ENCODE measurements at regions of chr17 and their contacts with region 1.

Region 1: GRCh38 chr17:82716203-82717010 is at the start of gene FN3KRP:
- DNase-seq: peak; percentile 85
- H3K4me3 Mint-ChIP-seq: peak within 1 kb of the TSS; percentile 93
- H3K27ac Mint-ChIP-seq: peak within 1 kb of the TSS; percentile 86
- H3K4me1 Mint-ChIP-seq: peaks cover 18% of the 10 kb centered on the region
- H3K27me3 Mint-ChIP-seq: no peaks in the 10 kb centered on the region
- total RNA-seq, gene FN3KRP: 37.6 and 43.7 TPM in 2 replicates

Region 2: GRCh38 chr17:82648166-82648668 is 68.2 kb before region 1 on chr17 and contains the start of gene WDR45B:
- intact Hi-C with region 1: loop called (anchors 1 kb)
- DNase-seq: peak; percentile 90
- H3K4me3 Mint-ChIP-seq: peak within 1 kb of the TSS; percentile 89
- H3K27ac Mint-ChIP-seq: peak within 1 kb of the TSS; percentile 76
- H3K4me1 Mint-ChIP-seq: peaks cover 25% of the 10 kb centered on the region
- H3K27me3 Mint-ChIP-seq: no peaks in the 10 kb centered on the region
- total RNA-seq, gene WDR45B: 55.1 and 56.7 TPM in 2 replicates

Region 3: GRCh38 chr17:82698065-82698973 is 18.1 kb before region 1 on chr17 and contains the start of gene RAB40B:
- intact Hi-C with region 1: loop called (anchors 1 kb)
- DNase-seq: peak; percentile 98
- H3K4me3 Mint-ChIP-seq: peak within 1 kb of the TSS; percentile 83
- H3K27ac Mint-ChIP-seq: no peak within 1 kb of the TSS
- H3K4me1 Mint-ChIP-seq: no peaks in the 10 kb centered on the region
- H3K27me3 Mint-ChIP-seq: peaks cover 10% of the 10 kb centered on the region
- total RNA-seq, gene RAB40B: 3.6 and 5.2 TPM in 2 replicates

Region 4: GRCh38 chr17:82734987-82735866 is 18.8 kb after region 1 on chr17 and contains the start of gene FN3K:
- intact Hi-C with region 1: loop called (anchors 1 kb)
- DNase-seq: peak; percentile 26
- H3K4me3 Mint-ChIP-seq: peak within 1 kb of the TSS; percentile 65
- H3K27ac Mint-ChIP-seq: no peak within 1 kb of the TSS
- H3K4me1 Mint-ChIP-seq: no peaks in the 10 kb centered on the region
- H3K27me3 Mint-ChIP-seq: no peaks in the 10 kb centered on the region
- total RNA-seq, gene FN3K: 1.9 and 2.7 TPM in 2 replicates

Region 5: GRCh38 chr17:82751571-82752370 is 35.4 kb after region 1 on chr17 and contains the start of gene TBCD:
- intact Hi-C with region 1: loop called (anchors 1 kb)
- DNase-seq: peak; percentile 81
- H3K4me3 Mint-ChIP-seq: peak within 1 kb of the TSS; percentile 90
- H3K27ac Mint-ChIP-seq: peak within 1 kb of the TSS; percentile 61
- H3K4me1 Mint-ChIP-seq: peaks cover 27% of the 10 kb centered on the region
- H3K27me3 Mint-ChIP-seq: peaks cover 4% of the 10 kb centered on the region
- total RNA-seq, gene TBCD: 106 and 111 TPM in 2 replicates

Region 6: GRCh38 chr17:82767041-82767754 is 50.8 kb after region 1 on chr17:
- intact Hi-C with region 1: loop called (anchors 5 kb)
- DNase-seq: no peak
- H3K4me3 Mint-ChIP-seq: no peak overlapping the region
- H3K27ac Mint-ChIP-seq: no peak overlapping the region
- H3K4me1 Mint-ChIP-seq: peaks cover 16% of the 10 kb centered on the region
- H3K27me3 Mint-ChIP-seq: no peaks in the 10 kb centered on the region

Region 7: GRCh38 chr17:83051395-83052233 is 335.2 kb after region 1 on chr17:
- intact Hi-C with region 1: loop called (anchors 1 kb)
- DNase-seq: peak; percentile 98
- H3K4me3 Mint-ChIP-seq: peak overlapping the region; percentile 90
- H3K27ac Mint-ChIP-seq: peak overlapping the region; percentile 84
- H3K4me1 Mint-ChIP-seq: peaks cover 26% of the 10 kb centered on the region
- H3K27me3 Mint-ChIP-seq: no peaks in the 10 kb centered on the region